Lower leg skin (tissue), 4 donors: ENCODE measurements at regions of chr2 and their contacts with region 1.

Region 1: GRCh38 chr2:20781656-20782265 is 41.1 kb downstream of the LDAH start:
- DNase-seq: no peak
- H3K4me3 ChIP-seq: no peak overlapping the region
- CTCF ChIP-seq: no peak
- POLR2A ChIP-seq: no peak

Region 2: DNA sequence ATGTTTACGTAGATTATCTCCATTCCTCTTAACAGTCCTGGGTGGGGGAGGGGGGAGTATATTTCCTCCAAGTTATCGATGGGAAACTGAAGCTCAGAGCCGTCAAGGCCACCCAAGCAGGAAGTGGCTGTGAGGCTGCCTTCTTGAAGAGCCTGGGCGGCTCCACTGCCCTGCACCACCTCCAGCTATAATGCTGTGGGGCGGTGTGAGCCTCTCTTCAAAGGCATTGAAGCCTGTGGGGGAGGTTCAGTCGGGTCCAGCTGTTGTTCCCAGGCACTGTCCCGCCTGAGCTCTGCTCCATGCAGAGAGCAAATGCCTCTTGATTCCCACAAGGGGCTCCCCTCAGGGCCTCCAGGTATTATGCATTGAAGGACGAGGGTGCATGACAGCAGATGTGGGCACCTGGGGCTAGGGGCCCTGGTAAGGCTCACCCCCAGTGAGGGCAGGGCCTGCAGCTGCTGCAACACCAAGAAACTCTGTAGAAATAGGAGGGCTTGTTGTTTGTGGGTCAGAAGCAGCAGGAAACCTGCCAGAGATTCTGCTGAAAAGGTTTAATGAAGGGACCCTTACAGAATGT is 700.8 kb before region 1 on chr2:
- intact Hi-C with region 1: no loop called
- DNase-seq: no peak
- H3K4me3 ChIP-seq: no peak overlapping the region
- CTCF ChIP-seq: no peak
- POLR2A ChIP-seq: no peak

Region 3: GRCh38 chr2:20962939-20963557 is 181.3 kb after region 1 on chr2:
- intact Hi-C with region 1: loop called (anchors 2 kb)
- DNase-seq: peak; percentile 64 to 92
- H3K4me3 ChIP-seq: no peak overlapping the region
- CTCF ChIP-seq: peak in 1 of 3 donors; percentile 89
- POLR2A ChIP-seq: no peak